Naive thymus-derived CD4-positive, alpha-beta T cell (primary cell): ENCODE measurements at regions of chr19 and their contacts with region 1.

Region 1: DNA sequence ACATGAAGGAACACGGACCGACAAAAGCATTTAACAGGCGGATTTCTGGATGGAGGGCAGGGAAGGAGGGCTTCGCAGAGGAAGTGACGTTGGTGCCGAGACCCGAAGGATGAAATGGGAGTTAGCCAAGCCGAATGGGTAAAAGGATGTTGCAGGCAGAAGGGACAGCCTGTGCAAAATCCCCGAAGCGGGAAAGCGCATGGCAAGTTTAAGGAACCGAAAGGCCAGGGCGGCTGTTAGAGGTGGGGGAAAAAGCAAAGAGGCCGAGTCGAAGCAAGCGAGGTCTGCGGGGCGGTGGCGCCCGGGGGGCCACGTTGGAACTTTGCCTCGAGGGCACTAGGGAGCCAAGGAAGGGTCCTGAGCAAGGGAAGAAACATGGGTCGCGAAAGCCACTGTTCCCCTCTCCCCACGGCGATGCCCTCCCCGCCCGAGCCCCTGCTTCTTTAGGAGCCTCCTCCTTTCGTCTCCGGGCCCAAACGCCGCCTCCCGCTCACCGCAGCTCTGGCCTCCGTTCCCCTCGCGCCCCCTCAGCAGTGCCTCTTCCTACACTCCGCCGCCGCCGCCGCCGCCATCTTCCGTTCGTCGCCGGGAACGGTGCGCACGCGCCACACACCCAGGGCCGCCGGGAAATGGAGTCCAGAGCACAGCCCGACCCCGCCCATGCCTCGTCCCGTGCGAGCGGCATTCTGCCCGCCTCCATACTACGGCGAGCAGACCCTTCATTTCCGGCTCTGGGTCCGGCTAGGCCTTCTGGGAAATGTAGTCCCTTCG is at the start of gene SYMPK:
- DNase-seq: peak; percentile 93 to 99 (median 99)
- ATAC-seq: peak; percentile 99
- H3K4me3 ChIP-seq: peak within 1 kb of the TSS; percentile 95
- H3K4me3 Mint-ChIP-seq: peak within 1 kb of the TSS; percentile 90 to 100 (median 96)
- H3K27ac ChIP-seq: peak within 1 kb of the TSS; percentile 86
- H3K27ac Mint-ChIP-seq: peak within 1 kb of the TSS; percentile 84 to 99 (median 95)
- H3K4me1 ChIP-seq: peaks cover 12 to 15% of the 10 kb centered on the region in 2 donors
- H3K4me1 Mint-ChIP-seq: peaks cover 29 to 37% (median 36%) of the 10 kb centered on the region in 7 donors
- H3K27me3 ChIP-seq: peaks cover 0 to 4% of the 10 kb centered on the region in 2 donors
- H3K27me3 Mint-ChIP-seq: peaks cover 6 to 39% (median 21%) of the 10 kb centered on the region in 5 donors
- total RNA-seq, gene SYMPK: 81.3 to 110 (median 96.4) TPM

Region 2: DNA sequence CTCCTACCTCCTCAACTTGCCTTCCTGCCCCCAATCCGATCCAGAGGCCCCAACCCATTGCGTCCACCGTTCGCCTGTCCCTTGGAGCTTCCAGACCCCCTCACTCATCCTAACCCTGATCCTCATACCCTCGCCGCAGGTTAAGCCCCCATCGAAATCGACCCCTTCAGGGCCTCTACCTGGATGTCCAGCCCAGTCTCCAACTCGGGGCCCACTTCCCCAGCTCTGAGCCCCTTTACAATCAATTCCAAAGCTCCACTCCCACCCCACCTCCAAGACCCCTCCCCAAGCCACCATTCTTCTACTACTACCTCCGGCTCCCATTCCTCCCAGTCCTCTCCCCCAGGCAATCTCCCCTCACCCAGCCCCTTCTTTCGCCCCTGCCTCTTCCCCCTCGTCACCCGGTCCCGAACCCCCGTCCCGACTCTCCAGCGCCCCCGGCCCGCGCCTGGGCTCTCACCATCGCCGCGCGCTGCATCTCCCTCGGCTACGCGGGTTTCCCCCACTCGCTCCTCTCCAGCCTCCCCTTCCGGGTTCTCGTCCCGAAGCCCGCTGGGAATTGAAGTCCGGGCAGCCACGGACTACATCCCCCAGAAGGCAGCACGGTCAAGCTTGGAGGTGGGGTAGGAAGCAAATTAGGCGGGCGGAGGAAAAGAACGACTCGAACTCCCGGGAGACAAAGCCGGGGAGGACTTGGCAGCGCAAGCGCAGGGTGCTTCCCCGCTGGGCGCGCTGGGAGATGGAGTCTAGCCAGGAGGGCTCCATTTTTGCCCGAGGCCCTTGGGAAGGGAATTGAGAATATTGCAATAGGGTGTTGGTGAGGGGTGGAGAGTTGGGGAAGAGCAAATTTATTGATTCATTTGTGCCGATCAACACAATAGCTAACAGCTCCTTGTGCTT is 132.1 kb before region 1 on chr19 and contains the start of gene FBXO46:
- CTCF ChIA-PET with region 1: no interaction called
- POLR2A ChIA-PET with region 1: no interaction called
- intact Hi-C with region 1: loop called (anchors 1 kb)
- DNase-seq: peak; percentile 74 to 94 (median 90)
- ATAC-seq: peak; percentile 99
- H3K4me3 ChIP-seq: peak within 1 kb of the TSS; percentile 96
- H3K4me3 Mint-ChIP-seq: peak within 1 kb of the TSS; percentile 85 to 98 (median 92)
- H3K27ac ChIP-seq: peak within 1 kb of the TSS; percentile 92
- H3K27ac Mint-ChIP-seq: peak within 1 kb of the TSS; percentile 60 to 93 (median 91)
- H3K4me1 ChIP-seq: peaks cover 6 to 14% of the 10 kb centered on the region in 2 donors
- H3K4me1 Mint-ChIP-seq: peaks cover 27 to 41% (median 33%) of the 10 kb centered on the region in 7 donors
- H3K27me3 ChIP-seq: no peaks in the 10 kb centered on the region
- H3K27me3 Mint-ChIP-seq: peaks cover 0 to under 1% (median 0%) of the 10 kb centered on the region in 5 donors
- total RNA-seq, gene FBXO46: 21.2 to 52.9 (median 36.6) TPM

Region 3: GRCh38 chr19:45792470-45793177 is 70.1 kb before region 1 on chr19 and contains the start of gene DMWD:
- CTCF ChIA-PET with region 1: no interaction called
- POLR2A ChIA-PET with region 1: interaction called, 3 read pairs
- intact Hi-C with region 1: loop called (anchors 1 to 2 kb)
- DNase-seq: peak; percentile 95 to 99 (median 98)
- ATAC-seq: peak; percentile 98
- H3K4me3 ChIP-seq: peak within 1 kb of the TSS; percentile 61
- H3K4me3 Mint-ChIP-seq: peak within 1 kb of the TSS; percentile 84 to 93 (median 88)
- H3K27ac ChIP-seq: peak within 1 kb of the TSS; percentile 15
- H3K27ac Mint-ChIP-seq: peak within 1 kb of the TSS; percentile 45 to 93 (median 85)
- H3K4me1 ChIP-seq: peaks cover 25 to 28% of the 10 kb centered on the region in 2 donors
- H3K4me1 Mint-ChIP-seq: peaks cover 31 to 44% (median 41%) of the 10 kb centered on the region in 7 donors
- H3K27me3 ChIP-seq: peaks cover 0 to 8% of the 10 kb centered on the region in 2 donors
- H3K27me3 Mint-ChIP-seq: peaks cover 6 to 76% (median 37%) of the 10 kb centered on the region in 5 donors
- total RNA-seq, gene DMWD: 18.7 to 43.2 (median 35.4) TPM

Region 4: DNA sequence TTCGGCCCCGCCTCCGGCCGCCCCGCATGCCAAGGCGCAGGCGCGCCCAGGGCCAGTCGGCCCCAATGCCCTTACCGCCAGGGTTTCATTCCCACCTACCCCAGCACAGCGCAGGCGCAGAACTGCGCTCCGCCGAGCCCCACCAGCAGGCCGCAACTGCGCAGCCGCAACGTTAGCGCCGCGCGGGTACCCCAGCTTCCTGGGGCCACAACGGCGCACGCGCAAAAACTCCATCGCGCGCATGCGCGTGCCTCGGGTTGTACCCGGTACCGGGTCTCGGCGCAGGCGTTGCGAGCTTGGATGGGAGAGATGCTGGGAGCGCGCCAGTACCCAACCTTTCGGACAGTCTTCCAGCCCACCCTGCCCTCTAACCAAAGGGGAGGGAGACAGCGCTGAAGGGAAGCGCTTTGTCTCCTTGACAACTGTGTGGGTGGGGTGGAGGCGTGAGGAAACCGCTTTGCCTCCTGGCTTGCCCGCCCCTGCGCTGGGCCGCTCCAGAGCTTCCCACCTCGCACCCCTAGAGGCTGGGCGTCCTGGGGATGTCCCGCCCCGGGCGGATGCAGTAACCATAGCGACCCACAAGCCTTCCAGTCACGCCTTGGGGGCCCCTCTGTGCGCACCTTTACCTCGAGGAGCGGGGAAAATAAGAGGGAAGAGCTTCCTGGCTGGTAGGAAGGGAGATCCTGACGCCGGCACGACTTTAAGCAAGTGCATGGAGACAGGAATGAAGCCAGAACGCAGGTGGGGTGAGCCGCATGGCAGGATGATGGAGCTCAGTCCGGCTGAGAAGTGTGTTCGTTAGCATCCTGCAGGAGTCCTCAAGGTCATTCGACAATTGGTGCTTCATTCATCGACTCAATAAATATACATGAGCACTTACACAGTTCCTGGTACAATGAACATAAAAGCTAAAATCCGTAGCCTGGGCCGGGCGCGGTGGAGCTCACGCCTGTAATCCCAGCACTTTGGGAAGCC is 40.2 kb after region 1 on chr19:
- CTCF ChIA-PET with region 1: interaction called, 3 read pairs
- POLR2A ChIA-PET with region 1: interaction called, 6 read pairs
- intact Hi-C with region 1: loop called (anchors 1 kb)
- DNase-seq: peak; percentile 96 to 100 (median 99)
- ATAC-seq: peak; percentile 93
- H3K4me3 ChIP-seq: peak overlapping the region; percentile 93
- H3K4me3 Mint-ChIP-seq: peak overlapping the region; percentile 93 to 98 (median 96)
- H3K27ac ChIP-seq: peak overlapping the region; percentile 78
- H3K27ac Mint-ChIP-seq: peak overlapping the region; percentile 71 to 93 (median 87)
- H3K4me1 ChIP-seq: peaks cover 0 to 5% of the 10 kb centered on the region in 2 donors
- H3K4me1 Mint-ChIP-seq: peaks cover 10 to 27% (median 17%) of the 10 kb centered on the region in 7 donors
- H3K27me3 ChIP-seq: no peaks in the 10 kb centered on the region
- H3K27me3 Mint-ChIP-seq: peaks cover 0 to 17% (median 0%) of the 10 kb centered on the region in 5 donors

Region 5: DNA sequence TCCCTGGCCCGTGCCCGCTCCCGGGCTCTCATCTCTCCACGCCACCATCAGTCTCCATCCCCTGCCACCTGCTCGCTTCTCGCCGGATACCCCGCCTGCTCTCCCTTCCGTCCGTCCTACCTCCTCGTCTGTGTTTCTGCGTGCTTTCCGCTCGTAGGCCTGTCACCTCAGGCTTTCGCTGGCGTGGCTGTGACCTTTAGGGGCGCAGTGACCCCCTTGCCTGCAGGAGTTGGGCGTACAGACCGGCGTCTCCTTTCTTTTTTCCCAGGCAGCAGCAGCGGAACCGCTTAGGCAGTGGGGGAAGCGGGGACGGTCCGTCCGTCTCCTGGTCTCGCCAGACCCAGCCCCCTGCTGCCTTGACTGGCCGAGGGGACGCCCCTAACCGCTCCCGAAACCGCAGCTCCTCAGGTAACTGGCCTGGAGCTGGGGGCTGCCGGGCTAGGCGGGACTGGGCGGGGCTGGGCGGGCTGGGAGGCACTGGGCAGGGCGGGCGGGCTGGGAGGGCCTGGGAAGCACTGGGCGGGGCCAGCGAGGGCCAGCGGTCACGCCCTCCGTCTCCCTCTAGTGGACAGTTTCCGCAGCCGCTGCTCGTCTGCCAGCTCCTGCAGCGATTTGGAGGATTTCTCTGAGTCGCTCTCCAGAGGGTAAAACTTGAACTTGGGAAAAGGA is 153.8 kb after region 1 on chr19:
- CTCF ChIA-PET with region 1: no interaction called
- POLR2A ChIA-PET with region 1: no interaction called
- intact Hi-C with region 1: loop called in 1 of 2 experiments (anchors 1 kb)
- DNase-seq: peak; percentile 57 to 84 (median 75)
- ATAC-seq: peak; percentile 92
- H3K4me3 ChIP-seq: peak overlapping the region; percentile 62
- H3K4me3 Mint-ChIP-seq: peak overlapping the region; percentile 85 to 97 (median 92)
- H3K27ac ChIP-seq: peak overlapping the region; percentile 55
- H3K27ac Mint-ChIP-seq: peak overlapping the region in 7 of 9 donors; percentile 28 to 82 (median 50)
- H3K4me1 ChIP-seq: peaks cover 0 to 7% of the 10 kb centered on the region in 2 donors
- H3K4me1 Mint-ChIP-seq: peaks cover 11 to 23% (median 18%) of the 10 kb centered on the region in 7 donors
- H3K27me3 ChIP-seq: peaks cover 0 to 6% of the 10 kb centered on the region in 2 donors
- H3K27me3 Mint-ChIP-seq: peaks cover 5 to 17% (median 12%) of the 10 kb centered on the region in 5 donors

Region 6: GRCh38 chr19:47047763-47048405 is 1185.1 kb after region 1 on chr19:
- CTCF ChIA-PET with region 1: no interaction called
- POLR2A ChIA-PET with region 1: no interaction called
- intact Hi-C with region 1: loop called in 1 of 2 experiments (anchors 5 kb)
- DNase-seq: peak; percentile 41 to 80 (median 58)
- ATAC-seq: peak; percentile 57
- H3K4me3 ChIP-seq: peak overlapping the region; percentile 86
- H3K4me3 Mint-ChIP-seq: peak overlapping the region; percentile 89 to 100 (median 97)
- H3K27ac ChIP-seq: peak overlapping the region; percentile 79
- H3K27ac Mint-ChIP-seq: peak overlapping the region; percentile 82 to 96 (median 93)
- H3K4me1 ChIP-seq: peaks cover 6 to 7% of the 10 kb centered on the region in 2 donors
- H3K4me1 Mint-ChIP-seq: peaks cover 10 to 22% (median 16%) of the 10 kb centered on the region in 7 donors
- H3K27me3 ChIP-seq: no peaks in the 10 kb centered on the region
- H3K27me3 Mint-ChIP-seq: peaks cover 0 to 2% (median 0%) of the 10 kb centered on the region in 5 donors